A673 (cell line): ENCODE measurements at regions of chr9 and their contacts with region 1.

Region 1: DNA sequence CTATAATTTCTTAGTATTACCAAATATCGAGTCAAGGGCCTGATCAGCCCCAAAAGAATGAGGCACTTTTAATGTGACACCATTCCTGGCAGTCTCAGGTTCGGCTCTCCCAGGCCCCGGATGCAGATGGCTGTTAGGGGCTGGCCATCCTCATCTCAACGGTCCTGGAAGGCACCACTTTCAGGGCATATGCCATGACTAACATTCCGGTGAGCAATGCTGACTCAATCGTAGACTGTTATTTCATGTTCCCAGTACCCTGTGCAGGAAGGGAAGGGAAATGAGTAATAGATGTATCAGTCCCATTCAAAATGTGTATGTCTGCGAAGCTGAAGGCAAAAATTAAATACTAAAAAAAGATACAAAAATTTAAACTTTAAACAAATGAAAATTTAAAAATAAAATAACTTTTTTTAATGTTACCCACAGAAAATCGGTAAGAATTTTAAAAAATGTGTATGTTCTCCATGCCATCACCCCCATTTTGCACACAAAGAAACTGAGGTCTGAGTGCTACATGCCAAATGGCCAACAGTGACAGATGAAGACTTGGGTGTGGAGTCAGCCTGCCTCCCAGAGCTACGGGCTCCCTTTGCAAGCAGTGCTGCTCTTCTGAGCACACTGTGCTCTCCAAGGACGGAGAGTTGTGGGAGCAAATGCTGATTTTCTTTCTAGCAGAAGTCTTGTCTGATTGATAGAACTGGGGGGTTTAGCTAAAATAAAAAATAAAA is 79.0 kb downstream of the GLDC start:
- DNase-seq: peak; percentile 49
- H3K4me3 ChIP-seq: no peak overlapping the region
- H3K27ac ChIP-seq: no peak overlapping the region
- H3K4me1 ChIP-seq: no peaks in the 10 kb centered on the region
- H3K27me3 ChIP-seq: no peaks in the 10 kb centered on the region
- CTCF ChIP-seq: no peak

Region 2: GRCh38 chr9:6197330-6197729 is 369.2 kb before region 1 on chr9:
- CTCF ChIA-PET with region 1: no interaction called
- POLR2A ChIA-PET with region 1: no interaction called
- intact Hi-C with region 1: loop called (anchors 10 kb)
- DNase-seq: peak; percentile 66
- H3K4me3 ChIP-seq: no peak overlapping the region
- H3K27ac ChIP-seq: no peak overlapping the region
- H3K4me1 ChIP-seq: no peaks in the 10 kb centered on the region
- H3K27me3 ChIP-seq: peaks cover 3% of the 10 kb centered on the region
- CTCF ChIP-seq: peak; percentile 68

Region 3: GRCh38 chr9:6353851-6354686 is 212.5 kb before region 1 on chr9:
- CTCF ChIA-PET with region 1: interaction called, 3 read pairs
- POLR2A ChIA-PET with region 1: no interaction called
- intact Hi-C with region 1: loop called (anchors 1 kb)
- DNase-seq: peak; percentile 71
- H3K4me3 ChIP-seq: no peak overlapping the region
- H3K27ac ChIP-seq: no peak overlapping the region
- H3K4me1 ChIP-seq: no peaks in the 10 kb centered on the region
- H3K27me3 ChIP-seq: peaks cover 35% of the 10 kb centered on the region
- CTCF ChIP-seq: peak; percentile 77